ENCODE measurements at regions of chr7 and their contacts with region 1.

Region 1: GRCh38 chr7:142587578-142588191 is 161.6 kb upstream of the PRSS1 start:
- DNase-seq: no peak
- H3K4me3 ChIP-seq: no peak overlapping the region
- H3K27ac ChIP-seq: no peak overlapping the region
- H3K4me1 ChIP-seq: peaks cover 0 to 5% (median 3%) of the 10 kb centered on the region in 4 experiments; a peak in 3 of 7 replicates
- H3K27me3 ChIP-seq: no peaks in the 10 kb centered on the region
- CTCF ChIP-seq: peak in 2 of 3 experiments; percentile 84 to 99; a peak in 3 of 4 replicates
- EP300 ChIP-seq: no peak
- POLR2A ChIP-seq: no peak
- RAD21 ChIP-seq: peak; percentile 26 to 40; a peak in 3 of 4 replicates

Region 2: GRCh38 chr7:142431491-142431890 is 156.2 kb before region 1 on chr7:
- CTCF ChIA-PET with region 1: no interaction called
- POLR2A ChIA-PET with region 1: no interaction called
- DNase-seq: no peak
- H3K4me3 ChIP-seq: no peak overlapping the region
- H3K27ac ChIP-seq: no peak overlapping the region
- H3K4me1 ChIP-seq: no peaks in the 10 kb centered on the region
- H3K27me3 ChIP-seq: no peaks in the 10 kb centered on the region
- CTCF ChIP-seq: no peak
- EP300 ChIP-seq: no peak
- POLR2A ChIP-seq: no peak
- RAD21 ChIP-seq: no peak

Region 3: GRCh38 chr7:142496545-142497041 is 91.1 kb before region 1 on chr7:
- CTCF ChIA-PET with region 1: interaction called, 18 read pairs
- POLR2A ChIA-PET with region 1: no interaction called
- DNase-seq: no peak
- H3K4me3 ChIP-seq: no peak overlapping the region
- H3K27ac ChIP-seq: no peak overlapping the region
- H3K4me1 ChIP-seq: no peaks in the 10 kb centered on the region
- H3K27me3 ChIP-seq: no peaks in the 10 kb centered on the region
- CTCF ChIP-seq: peak; percentile 58 to 83 (median 78)
- EP300 ChIP-seq: no peak
- POLR2A ChIP-seq: no peak
- RAD21 ChIP-seq: peak; percentile 37 to 61

Region 4: DNA sequence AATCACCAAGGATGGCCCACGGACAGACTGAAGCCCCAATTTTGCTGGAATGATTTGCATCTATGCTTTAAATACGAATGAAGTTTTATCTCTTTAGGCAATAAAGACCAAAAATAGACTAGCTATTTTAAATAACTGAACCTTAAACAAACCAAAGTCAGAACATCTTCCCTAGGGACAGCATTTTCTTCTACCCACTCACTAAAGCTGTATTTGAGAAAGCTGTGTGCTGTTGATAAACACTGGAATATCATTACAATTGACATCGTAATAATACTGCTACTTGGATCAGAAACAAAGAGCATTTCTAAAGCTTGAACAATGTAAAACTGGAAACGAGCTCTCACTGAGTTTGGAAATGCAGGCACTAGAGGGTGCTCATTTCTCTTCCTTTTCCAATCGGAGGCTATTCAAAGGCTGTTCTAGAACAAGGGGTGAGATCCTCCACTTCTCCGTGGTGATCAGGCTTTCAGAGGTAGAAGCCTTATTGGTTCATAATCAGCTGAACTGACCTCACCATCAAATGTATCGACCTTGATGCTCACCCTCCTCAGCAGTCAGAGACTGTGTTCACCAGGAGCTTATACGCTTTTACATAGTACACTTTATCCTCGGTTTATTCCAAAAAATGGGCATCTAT is 63.7 kb before region 1 on chr7:
- CTCF ChIA-PET with region 1: interaction called, 32 read pairs
- POLR2A ChIA-PET with region 1: no interaction called
- DNase-seq: no peak
- H3K4me3 ChIP-seq: no peak overlapping the region
- H3K27ac ChIP-seq: no peak overlapping the region
- H3K4me1 ChIP-seq: no peaks in the 10 kb centered on the region
- H3K27me3 ChIP-seq: 0 out of 7 replicates have a peak, but pooled peaks cover 0 to 2% (median 0%) of the 10 kb centered on the region in 4 experiments
- CTCF ChIP-seq: peak in 1 of 3 experiments; percentile 18; a peak in 1 of 4 replicates
- EP300 ChIP-seq: no peak
- POLR2A ChIP-seq: no peak
- RAD21 ChIP-seq: no peak

Region 5: GRCh38 chr7:142557971-142558582 is 29.6 kb before region 1 on chr7:
- CTCF ChIA-PET with region 1: interaction called, 46 read pairs
- POLR2A ChIA-PET with region 1: interaction called, 3 read pairs
- DNase-seq: peak; percentile 23 to 82
- H3K4me3 ChIP-seq: no peak overlapping the region
- H3K27ac ChIP-seq: no peak overlapping the region
- H3K4me1 ChIP-seq: no peaks in the 10 kb centered on the region
- H3K27me3 ChIP-seq: no peaks in the 10 kb centered on the region; a peak in 1 of 7 replicates
- CTCF ChIP-seq: peak; percentile 79 to 95 (median 84)
- EP300 ChIP-seq: no peak
- POLR2A ChIP-seq: no peak
- RAD21 ChIP-seq: peak; percentile 45 to 65; a peak in 3 of 4 replicates

Region 6: DNA sequence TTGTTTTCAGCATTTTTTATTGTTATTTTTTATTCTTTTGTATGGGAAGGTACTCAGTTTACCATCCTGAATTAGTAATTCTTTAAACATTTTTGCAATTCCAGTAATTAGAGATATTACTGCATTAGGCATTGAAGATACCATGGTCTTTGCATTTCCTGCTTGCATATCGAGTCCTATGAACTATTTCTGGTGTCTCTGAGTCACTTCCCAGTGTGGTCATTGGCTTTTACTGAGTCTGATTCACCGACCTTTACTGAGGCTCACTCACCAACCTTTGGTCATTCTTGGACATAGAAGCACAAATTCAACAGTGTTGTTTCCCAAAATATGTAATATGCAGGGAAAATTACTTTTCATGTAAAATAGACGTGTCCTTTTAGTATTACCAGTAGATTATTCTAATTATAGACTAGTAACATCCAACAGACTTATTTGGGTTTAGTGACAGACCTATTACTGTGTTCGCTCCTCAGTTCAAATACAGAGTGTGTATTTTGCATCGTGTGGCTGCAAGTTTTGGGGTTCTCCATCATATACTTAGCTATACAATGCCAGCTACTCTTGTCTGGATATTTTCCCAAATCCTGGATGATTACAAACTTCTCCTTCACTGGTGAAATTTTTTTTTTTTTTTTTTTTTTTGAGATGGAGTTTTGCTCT is 19.1 kb before region 1 on chr7:
- CTCF ChIA-PET with region 1: interaction called, 32 read pairs
- POLR2A ChIA-PET with region 1: no interaction called
- DNase-seq: no peak
- H3K4me3 ChIP-seq: no peak overlapping the region
- H3K27ac ChIP-seq: no peak overlapping the region
- H3K4me1 ChIP-seq: peaks cover 0 to 5% (median 0%) of the 10 kb centered on the region in 4 experiments; a peak in 2 of 7 replicates
- H3K27me3 ChIP-seq: no peaks in the 10 kb centered on the region
- CTCF ChIP-seq: no peak
- EP300 ChIP-seq: no peak
- POLR2A ChIP-seq: no peak
- RAD21 ChIP-seq: no peak

Region 7: DNA sequence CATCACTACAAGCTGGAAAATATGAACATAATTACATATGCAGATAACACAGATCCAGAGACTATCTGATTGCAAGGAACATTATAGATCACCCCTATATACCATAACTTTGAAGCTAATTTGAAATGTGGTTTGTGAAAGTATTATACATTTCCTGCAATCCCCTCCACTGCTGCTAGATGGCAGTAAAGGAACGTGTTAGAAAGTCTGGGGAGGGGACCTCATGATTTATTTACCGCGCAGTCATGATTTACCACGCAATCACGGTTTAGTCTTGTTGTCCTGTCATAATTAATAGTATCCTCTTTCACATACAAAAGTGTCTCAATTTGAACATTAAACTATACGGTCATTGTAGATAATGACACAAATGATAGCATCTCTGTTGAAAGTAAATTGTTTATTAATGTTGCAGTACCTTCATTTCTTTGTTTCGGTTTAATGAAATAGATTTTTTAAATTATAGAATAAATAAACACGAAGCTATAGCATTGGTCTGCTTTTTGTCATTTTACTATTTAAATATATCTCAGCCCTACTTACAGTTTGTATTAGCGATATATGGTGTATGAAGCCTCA is 16.3 kb after region 1 on chr7:
- CTCF ChIA-PET with region 1: interaction called, 39 read pairs
- POLR2A ChIA-PET with region 1: no interaction called
- DNase-seq: peak in 1 of 2 experiments; percentile 58
- H3K4me3 ChIP-seq: peak overlapping the region in 1 of 4 experiments; percentile 43; a peak in 1 of 8 replicates
- H3K27ac ChIP-seq: no peak overlapping the region
- H3K4me1 ChIP-seq: no peaks in the 10 kb centered on the region
- H3K27me3 ChIP-seq: no peaks in the 10 kb centered on the region
- CTCF ChIP-seq: peak in 2 of 3 experiments; percentile 75 to 77; a peak in 3 of 4 replicates
- EP300 ChIP-seq: no peak
- POLR2A ChIP-seq: no peak
- RAD21 ChIP-seq: peak; percentile 86

Region 8: DNA sequence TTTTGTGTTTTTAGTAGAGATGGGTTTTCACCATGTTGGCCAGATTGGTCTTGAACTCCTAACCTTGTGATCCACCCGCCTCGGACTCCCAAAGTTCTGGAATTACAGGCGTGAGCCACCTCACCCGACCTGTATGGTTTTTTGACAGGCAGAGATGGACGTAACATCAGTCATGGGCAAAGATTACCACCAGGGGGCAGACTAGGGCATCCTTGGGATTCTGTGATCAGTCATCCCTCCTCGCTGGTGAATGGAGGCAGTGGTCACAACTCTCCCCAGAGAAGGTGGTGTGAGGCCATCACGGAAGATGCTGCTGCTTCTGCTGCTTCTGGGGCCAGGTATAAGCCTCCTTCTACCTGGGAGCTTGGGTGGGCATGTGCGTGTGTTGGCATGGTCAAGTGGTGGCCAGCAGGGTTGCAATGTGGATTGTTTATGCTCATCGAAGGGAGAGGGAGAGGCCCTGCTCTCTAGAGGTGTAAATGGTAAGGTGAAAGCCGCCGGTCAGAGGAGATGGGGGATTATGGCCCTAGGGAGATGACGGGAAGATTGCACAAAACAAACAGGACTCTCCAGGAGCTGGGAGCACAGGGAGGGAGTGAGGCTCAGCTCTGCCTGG is 38.8 kb after region 1 on chr7:
- CTCF ChIA-PET with region 1: interaction called, 13 read pairs
- POLR2A ChIA-PET with region 1: no interaction called
- DNase-seq: peak in 1 of 2 experiments; percentile 94
- H3K4me3 ChIP-seq: no peak overlapping the region
- H3K27ac ChIP-seq: no peak overlapping the region
- H3K4me1 ChIP-seq: peaks cover 0 to 3% (median 0%) of the 10 kb centered on the region in 4 experiments; a peak in 1 of 7 replicates
- H3K27me3 ChIP-seq: no peaks in the 10 kb centered on the region; a peak in 1 of 7 replicates
- CTCF ChIP-seq: peak; percentile 60 to 85 (median 79)
- EP300 ChIP-seq: no peak
- POLR2A ChIP-seq: no peak
- RAD21 ChIP-seq: peak; percentile 55 to 62

Measured in H1 (cell line).